ENCODE measurements at regions of chrX and their contacts with region 1.

Region 1: GRCh38 chrX:72245461-72246089 is 6.7 kb upstream of the ERCC6L start:
- DNase-seq: no peak
- ATAC-seq: no peak
- H3K4me3 Mint-ChIP-seq: no peak overlapping the region
- H3K27ac Mint-ChIP-seq: no peak overlapping the region
- H3K4me1 Mint-ChIP-seq: no peaks in the 10 kb centered on the region
- H3K27me3 Mint-ChIP-seq: no peaks in the 10 kb centered on the region
- CTCF ChIP-seq: peak; percentile 21

Region 2: DNA sequence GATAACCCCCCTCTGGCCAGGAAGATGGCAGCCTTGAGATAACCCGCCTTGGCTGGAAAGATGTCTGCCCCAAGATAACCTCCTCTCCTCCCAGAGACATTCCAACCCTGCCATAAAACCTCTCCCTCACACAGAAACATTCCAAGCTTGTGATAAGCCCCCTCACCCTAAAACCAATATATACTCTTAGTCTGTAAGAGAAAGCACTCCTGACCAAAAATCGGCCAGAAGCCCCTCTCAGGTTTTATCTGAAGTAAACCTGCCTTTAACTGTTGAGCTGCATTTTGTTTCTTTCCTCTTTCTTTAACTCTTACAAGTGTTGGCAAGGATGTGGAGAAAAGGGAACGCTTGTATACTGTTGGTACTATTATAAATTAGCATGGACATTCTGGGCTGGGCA is 15.3 kb before region 1 on chrX:
- CTCF ChIA-PET with region 1: no interaction called
- POLR2A ChIA-PET with region 1: no interaction called
- intact Hi-C with region 1: no loop called
- DNase-seq: no peak
- ATAC-seq: no peak
- H3K4me3 Mint-ChIP-seq: no peak overlapping the region
- H3K27ac Mint-ChIP-seq: no peak overlapping the region
- H3K4me1 Mint-ChIP-seq: no peaks in the 10 kb centered on the region
- H3K27me3 Mint-ChIP-seq: no peaks in the 10 kb centered on the region
- CTCF ChIP-seq: no peak

Region 3: GRCh38 chrX:72540318-72540717 is 294.7 kb after region 1 on chrX:
- CTCF ChIA-PET with region 1: interaction called, 8 read pairs
- POLR2A ChIA-PET with region 1: no interaction called
- intact Hi-C with region 1: loop called (anchors 1 kb)
- DNase-seq: no peak
- ATAC-seq: no peak
- H3K4me3 Mint-ChIP-seq: no peak overlapping the region
- H3K27ac Mint-ChIP-seq: no peak overlapping the region
- H3K4me1 Mint-ChIP-seq: no peaks in the 10 kb centered on the region
- H3K27me3 Mint-ChIP-seq: no peaks in the 10 kb centered on the region
- CTCF ChIP-seq: no peak

Region 4: DNA sequence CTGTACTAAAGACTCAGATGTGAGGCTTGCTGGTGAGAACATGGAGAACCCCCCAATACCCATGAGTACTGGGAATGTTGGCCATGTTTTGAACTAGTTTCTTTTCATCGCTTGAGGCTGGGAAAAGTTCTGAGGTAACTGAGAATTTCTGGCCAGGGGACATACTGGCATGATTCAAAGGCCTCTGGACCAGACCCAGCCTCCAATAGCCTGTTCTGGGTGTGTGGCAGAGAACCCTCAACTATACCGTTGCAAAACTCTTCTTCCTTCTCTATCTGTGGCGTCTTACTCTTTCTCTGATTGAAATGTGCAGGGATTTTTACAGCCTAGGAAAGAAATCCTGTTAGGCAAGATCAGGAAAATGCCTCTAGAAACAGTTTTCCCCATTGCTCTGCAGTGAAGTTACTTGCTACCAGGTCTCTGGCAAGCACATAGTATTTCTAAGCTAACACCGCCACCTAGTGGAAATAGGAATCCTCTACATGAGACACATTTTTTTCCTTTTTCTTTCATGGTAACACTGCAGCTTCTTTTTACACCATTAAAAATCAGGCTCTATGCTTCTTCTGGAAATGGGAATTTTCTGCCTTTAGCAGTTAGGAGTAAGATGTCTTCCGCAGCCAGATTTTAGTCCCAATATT is 1887.7 kb after region 1 on chrX:
- CTCF ChIA-PET with region 1: interaction called, 6 read pairs
- POLR2A ChIA-PET with region 1: no interaction called
- intact Hi-C with region 1: loop called (anchors 5 kb)
- DNase-seq: no peak
- ATAC-seq: no peak
- H3K4me3 Mint-ChIP-seq: no peak overlapping the region
- H3K27ac Mint-ChIP-seq: no peak overlapping the region
- H3K4me1 Mint-ChIP-seq: no peaks in the 10 kb centered on the region
- H3K27me3 Mint-ChIP-seq: no peaks in the 10 kb centered on the region
- CTCF ChIP-seq: no peak